Right ventricle myocardium superior (tissue), 1 donor: ENCODE measurements at regions of chr7 and their contacts with region 1.

Region 1: DNA sequence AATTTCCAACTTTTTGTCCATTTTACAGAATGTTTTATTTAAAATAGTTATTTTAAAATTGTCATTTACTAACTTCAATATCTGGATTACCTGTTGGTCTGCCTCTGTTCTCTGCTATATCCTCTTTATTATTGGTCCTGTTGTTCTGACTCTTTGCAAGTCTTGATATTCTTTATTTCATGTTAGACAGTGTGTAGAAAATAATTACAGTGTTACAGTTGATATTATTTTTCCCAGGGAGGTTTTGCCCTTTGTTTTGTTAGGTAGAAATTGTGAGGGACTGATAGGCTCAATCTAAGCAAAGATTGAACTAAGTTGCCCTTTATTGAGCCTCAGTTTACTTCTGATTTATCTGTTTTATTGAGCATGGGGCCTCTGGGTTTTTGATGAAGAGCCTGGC is 49.4 kb upstream of the CADPS2 start:
- DNase-seq: no peak
- ATAC-seq: no peak

Region 2: DNA sequence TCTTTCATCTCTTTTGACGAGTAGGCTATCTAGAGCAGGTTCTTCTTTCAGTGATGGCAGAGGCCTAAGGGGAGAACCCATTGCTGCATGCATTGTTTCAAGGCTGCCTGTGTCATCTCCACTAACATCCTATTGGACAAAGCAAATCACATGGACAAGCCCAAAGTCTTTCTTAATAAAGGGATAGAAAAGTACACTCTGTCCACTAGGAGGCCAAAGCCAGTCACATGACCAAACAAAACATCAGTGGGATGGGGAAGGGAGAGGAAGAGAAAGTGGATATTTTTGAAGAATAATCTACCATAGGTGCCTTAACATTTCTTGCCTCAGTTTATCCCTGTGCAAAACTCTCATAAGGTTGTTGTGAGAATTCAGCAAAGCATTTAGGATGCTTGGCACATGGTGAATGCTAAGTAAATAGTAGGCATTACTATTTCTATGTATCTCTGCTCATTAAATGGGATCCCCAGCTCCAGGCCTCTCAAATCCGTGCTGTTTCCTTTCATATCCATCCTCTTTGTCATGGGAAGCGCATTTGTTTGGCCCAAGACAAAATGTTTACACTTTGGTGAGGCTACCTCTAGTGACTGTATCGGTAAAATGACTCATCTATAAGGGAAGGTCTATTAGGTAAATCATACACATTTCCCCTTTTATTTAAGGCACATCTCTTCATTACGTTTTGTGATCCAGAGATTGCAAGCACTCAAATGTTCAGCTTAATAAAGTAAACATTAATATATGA is 32.7 kb before region 1 on chr7:
- intact Hi-C with region 1: loop called (anchors 2 kb)
- DNase-seq: no peak
- ATAC-seq: no peak

Region 3: DNA sequence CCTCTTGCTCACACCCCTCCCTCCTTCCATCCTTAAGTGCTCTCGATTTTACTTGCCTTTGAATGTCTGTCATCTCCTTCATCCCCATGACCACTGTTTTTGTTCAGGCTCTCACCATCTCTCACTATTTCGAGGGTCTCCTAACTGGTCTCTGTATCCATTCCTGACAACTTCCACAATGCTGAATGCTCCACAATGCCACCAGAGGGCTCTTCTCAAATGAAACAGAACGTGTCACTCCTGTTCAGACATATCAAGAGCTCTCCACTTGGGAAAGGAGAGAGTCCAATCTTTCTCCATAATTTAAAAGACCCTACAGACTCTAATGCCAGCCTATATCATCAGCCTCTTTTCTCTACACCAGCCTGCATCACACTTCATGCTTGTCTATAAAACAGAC is 273.2 kb after region 1 on chr7:
- intact Hi-C with region 1: no loop called
- DNase-seq: no peak
- ATAC-seq: no peak